K562 (cell line): ENCODE measurements at regions of chr5 and their contacts with region 1.

Region 1: GRCh38 chr5:82351754-82352145 is 73.6 kb upstream of the RPS23 start:
- DNase-seq: peak; percentile 62 to 76 (median 67)
- ATAC-seq: peak; percentile 86
- H3K4me3 ChIP-seq: no peak overlapping the region
- H3K27ac ChIP-seq: no peak overlapping the region
- H3K4me1 ChIP-seq: peaks cover 0 to 13% of the 10 kb centered on the region in 2 experiments; a peak in 3 of 5 replicates
- H3K27me3 ChIP-seq: no peaks in the 10 kb centered on the region
- CTCF ChIP-seq: peak; percentile 54 to 80 (median 76); a peak in 5 of 6 replicates
- EP300 ChIP-seq: no peak
- POLR2A ChIP-seq: no peak
- RAD21 ChIP-seq: peak; percentile 95 to 96

Region 2: GRCh38 chr5:82312373-82312856 is 39.3 kb before region 1 on chr5:
- CTCF ChIA-PET with region 1: interaction called, 5 read pairs
- POLR2A ChIA-PET with region 1: interaction called, 3 read pairs
- in situ Hi-C with region 1: no loop called
- intact Hi-C with region 1: loop called (anchors 1 kb)
- DNase-seq: peak; percentile 52 to 84 (median 56)
- ATAC-seq: peak; percentile 93
- H3K4me3 ChIP-seq: no peak overlapping the region
- H3K27ac ChIP-seq: no peak overlapping the region
- H3K4me1 ChIP-seq: peaks cover 0 to 10% of the 10 kb centered on the region in 2 experiments; a peak in 4 of 5 replicates
- H3K27me3 ChIP-seq: no peaks in the 10 kb centered on the region
- CTCF ChIP-seq: peak; percentile 81 to 95 (median 95)
- EP300 ChIP-seq: no peak
- POLR2A ChIP-seq: no peak
- RAD21 ChIP-seq: peak; percentile 82 to 93

Region 3: GRCh38 chr5:82494942-82495341 is 143.2 kb after region 1 on chr5:
- CTCF ChIA-PET with region 1: no interaction called
- POLR2A ChIA-PET with region 1: no interaction called
- in situ Hi-C with region 1: no loop called
- intact Hi-C with region 1: loop called (anchors 10 kb)
- DNase-seq: peak in 1 of 4 experiments; percentile 8
- ATAC-seq: peak; percentile 54; the same call in 1 of the 3 replicates
- H3K4me3 ChIP-seq: no peak overlapping the region
- H3K27ac ChIP-seq: no peak overlapping the region
- H3K4me1 ChIP-seq: no peaks in the 10 kb centered on the region
- H3K27me3 ChIP-seq: no peaks in the 10 kb centered on the region
- CTCF ChIP-seq: peak in 1 of 3 experiments; percentile 23; a peak in 1 of 6 replicates
- EP300 ChIP-seq: no peak
- POLR2A ChIP-seq: no peak
- RAD21 ChIP-seq: peak in 1 of 2 experiments; percentile 35; a peak in 2 of 4 replicates

Region 4: DNA sequence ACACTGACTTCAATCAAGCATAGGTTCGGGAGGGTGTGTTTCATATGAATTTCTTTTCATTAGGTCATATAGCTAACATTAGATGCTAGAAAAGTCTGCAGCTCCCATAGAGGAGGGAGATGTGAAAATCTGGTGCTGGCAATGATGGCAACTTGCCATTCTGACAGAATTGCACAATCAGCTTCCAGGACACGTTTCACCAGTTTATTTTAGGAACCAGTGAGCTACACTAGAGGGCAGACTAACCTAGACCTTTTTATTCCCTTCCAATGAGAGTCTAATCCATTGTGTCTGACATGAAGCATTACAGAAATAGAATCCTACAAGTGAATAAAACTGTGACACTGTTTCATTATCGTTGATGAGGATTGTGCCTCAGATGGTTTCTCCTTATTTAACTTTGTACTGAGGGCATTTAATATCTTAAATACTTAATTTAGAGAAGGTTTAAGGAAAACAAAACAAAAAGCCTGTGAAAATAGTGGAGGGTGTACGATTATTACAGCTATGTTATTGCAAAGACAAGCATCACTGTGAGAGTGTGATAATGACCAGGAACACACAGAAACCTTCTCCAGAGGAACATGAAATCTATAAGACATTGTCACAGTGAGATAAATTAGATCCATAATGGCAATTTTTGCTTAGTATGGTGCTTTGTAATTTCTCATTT is 289.7 kb after region 1 on chr5:
- CTCF ChIA-PET with region 1: no interaction called
- POLR2A ChIA-PET with region 1: no interaction called
- in situ Hi-C with region 1: loop called (anchors 25 kb)
- intact Hi-C with region 1: loop called (anchors 2 kb)
- DNase-seq: peak; percentile 27 to 51 (median 40)
- ATAC-seq: peak; percentile 83
- H3K4me3 ChIP-seq: no peak overlapping the region
- H3K27ac ChIP-seq: no peak overlapping the region
- H3K4me1 ChIP-seq: no peaks in the 10 kb centered on the region
- H3K27me3 ChIP-seq: no peaks in the 10 kb centered on the region
- CTCF ChIP-seq: peak; percentile 43 to 75 (median 64); a peak in 5 of 6 replicates
- EP300 ChIP-seq: no peak
- POLR2A ChIP-seq: no peak
- RAD21 ChIP-seq: peak; percentile 78 to 80

Region 5: DNA sequence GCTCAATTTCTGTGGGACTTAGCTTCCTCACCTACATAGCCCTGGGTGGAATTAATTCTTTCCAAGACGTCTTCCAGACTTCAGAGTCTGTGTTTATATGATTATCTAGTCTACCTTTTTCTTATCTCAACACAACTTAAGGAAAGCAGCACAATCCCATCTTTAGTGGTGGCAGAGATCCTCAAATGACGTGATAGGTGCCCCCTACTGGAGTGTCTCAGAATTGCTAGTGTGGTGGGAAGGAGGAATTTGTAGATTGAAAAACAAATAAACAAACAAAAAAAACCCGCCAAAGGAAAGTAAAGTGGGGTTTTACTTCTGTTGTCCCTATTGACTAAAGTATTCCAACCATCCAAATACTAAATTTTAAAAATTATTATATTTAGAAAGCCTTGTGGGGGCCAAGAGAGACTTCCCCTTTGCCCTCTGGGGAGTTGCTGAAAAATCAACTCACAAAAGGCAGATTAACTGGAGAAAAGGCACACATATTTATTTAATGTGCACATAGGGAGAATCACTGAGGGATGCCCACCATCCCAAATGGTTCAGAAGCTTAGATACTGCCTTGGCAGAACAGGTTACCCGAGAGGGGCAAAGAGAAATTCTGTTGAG is 442.2 kb after region 1 on chr5:
- CTCF ChIA-PET with region 1: no interaction called
- POLR2A ChIA-PET with region 1: no interaction called
- in situ Hi-C with region 1: loop called (anchors 25 kb)
- intact Hi-C with region 1: loop called (anchors 5 kb)
- DNase-seq: peak; percentile 39 to 52 (median 46)
- ATAC-seq: peak; percentile 63; the same call in 1 of the 3 replicates
- H3K4me3 ChIP-seq: no peak overlapping the region
- H3K27ac ChIP-seq: no peak overlapping the region
- H3K4me1 ChIP-seq: peaks cover 0 to 3% of the 10 kb centered on the region in 2 experiments; a peak in 1 of 5 replicates
- H3K27me3 ChIP-seq: no peaks in the 10 kb centered on the region
- CTCF ChIP-seq: peak; percentile 51 to 68 (median 62); a peak in 5 of 6 replicates
- EP300 ChIP-seq: no peak
- POLR2A ChIP-seq: no peak
- RAD21 ChIP-seq: peak in 1 of 2 experiments; percentile 54; a peak in 2 of 4 replicates

Region 6: DNA sequence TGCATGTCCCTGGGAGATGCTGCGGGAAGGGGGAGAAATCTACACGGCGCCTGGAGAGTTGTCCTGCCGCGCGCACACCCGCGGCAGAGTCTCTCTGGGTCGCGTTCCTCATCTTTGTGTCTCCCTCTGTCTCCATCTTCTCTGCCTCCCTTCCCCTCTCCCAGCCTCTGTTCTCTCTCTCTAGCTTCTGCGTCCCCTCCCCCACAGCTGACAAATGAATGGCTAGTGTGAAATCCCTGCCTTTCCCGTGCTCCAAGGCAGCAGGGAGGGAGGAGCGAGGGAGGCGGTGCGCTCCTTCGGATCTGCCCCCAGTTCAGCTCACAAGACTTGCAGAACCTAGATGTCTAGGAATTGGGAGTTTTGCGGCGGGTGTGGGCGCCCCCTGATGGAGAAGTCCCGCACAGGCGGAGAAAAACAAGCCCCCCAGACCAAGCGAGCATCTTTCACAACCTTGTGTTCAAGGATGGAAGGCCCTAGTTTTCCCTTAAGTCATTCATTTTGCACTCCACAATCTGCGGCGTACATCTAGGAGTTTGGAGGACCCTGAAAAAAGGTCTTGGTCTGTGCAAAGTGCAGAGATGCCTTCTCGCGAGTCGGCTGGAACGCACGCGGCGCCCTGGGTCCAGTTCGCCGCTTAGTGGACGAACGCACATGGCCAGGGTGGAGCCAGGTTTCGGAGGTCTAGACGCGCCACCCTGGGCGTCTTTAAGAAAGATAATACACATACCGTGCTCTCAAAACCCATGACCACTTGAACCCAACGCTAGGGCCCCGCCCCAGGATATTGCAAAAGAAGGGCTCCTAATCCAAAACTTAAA is 1121.8 kb after region 1 on chr5:
- CTCF ChIA-PET with region 1: no interaction called
- POLR2A ChIA-PET with region 1: no interaction called
- in situ Hi-C with region 1: loop called (anchors 10 kb)
- intact Hi-C with region 1: loop called (anchors 1 kb)
- DNase-seq: peak; percentile 64 to 77 (median 70)
- ATAC-seq: peak; percentile 85
- H3K4me3 ChIP-seq: peak overlapping the region; percentile 40
- H3K27ac ChIP-seq: peak overlapping the region; percentile 53; the same call in 1 of the 3 replicates
- H3K4me1 ChIP-seq: peaks cover 5 to 36% of the 10 kb centered on the region in 2 experiments; a peak in 3 of 5 replicates
- H3K27me3 ChIP-seq: peaks cover 11 to 25% of the 10 kb centered on the region in 2 experiments; a peak in 4 of 5 replicates
- CTCF ChIP-seq: peak; percentile 73 to 87 (median 76)
- EP300 ChIP-seq: no peak
- POLR2A ChIP-seq: no peak
- RAD21 ChIP-seq: peak; percentile 71 to 78

Region 7: GRCh38 chr5:83564069-83564749 is 1212.5 kb after region 1 on chr5:
- CTCF ChIA-PET with region 1: interaction called, 16 read pairs
- POLR2A ChIA-PET with region 1: no interaction called
- in situ Hi-C with region 1: loop called (anchors 5 kb)
- intact Hi-C with region 1: loop called (anchors 5 kb)
- DNase-seq: peak; percentile 35 to 49 (median 43)
- ATAC-seq: peak; percentile 82
- H3K4me3 ChIP-seq: no peak overlapping the region
- H3K27ac ChIP-seq: no peak overlapping the region
- H3K4me1 ChIP-seq: no peaks in the 10 kb centered on the region
- H3K27me3 ChIP-seq: no peaks in the 10 kb centered on the region; a peak in 1 of 5 replicates
- CTCF ChIP-seq: peak in 2 of 3 experiments; percentile 29 to 68; a peak in 3 of 6 replicates
- EP300 ChIP-seq: no peak
- POLR2A ChIP-seq: no peak
- RAD21 ChIP-seq: peak; percentile 84 to 86